B cell (primary cell): ENCODE measurements at regions of chr1 and their contacts with region 1.

Region 1: DNA sequence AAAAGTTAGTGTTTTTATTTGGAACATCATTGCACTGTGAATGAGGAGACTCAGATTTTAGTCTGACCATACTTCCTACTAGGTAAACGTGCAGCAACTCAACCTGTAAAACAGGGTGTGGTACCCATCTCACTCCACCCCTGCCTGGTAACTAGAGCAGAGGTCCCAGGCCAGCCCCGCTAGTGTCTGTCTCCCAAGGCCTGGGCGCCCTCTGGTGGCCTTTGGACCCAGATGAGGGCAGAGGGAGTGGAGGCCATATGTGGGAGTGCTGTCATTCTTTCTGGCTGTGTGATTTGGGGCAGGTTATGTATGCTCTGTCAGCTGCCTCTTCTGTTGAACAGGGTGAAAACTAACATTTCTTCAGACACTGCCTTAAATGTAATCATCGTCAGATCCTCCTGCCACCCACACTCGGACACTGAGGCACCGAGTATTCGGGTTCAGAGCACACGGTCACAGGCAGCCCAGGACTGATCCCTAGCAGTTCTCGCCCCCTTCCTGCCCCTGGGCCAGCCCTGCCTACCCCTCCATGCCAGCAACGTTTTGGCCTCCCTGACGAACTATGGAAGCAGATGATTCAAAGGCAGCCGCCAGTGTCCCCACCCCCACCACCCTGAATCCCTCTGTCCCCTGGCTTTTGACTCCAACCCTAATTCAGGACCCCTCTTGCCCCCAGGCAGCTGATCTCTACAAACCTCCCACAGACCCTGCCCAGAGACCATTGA is 76.0 kb downstream of the CD247 start:
- DNase-seq: peak; percentile 84
- ATAC-seq: peak; percentile 92
- H3K4me3 ChIP-seq: no peak overlapping the region
- H3K4me3 Mint-ChIP-seq: peak overlapping the region; percentile 37
- H3K27ac ChIP-seq: no peak overlapping the region
- H3K27ac Mint-ChIP-seq: no peak overlapping the region
- H3K4me1 ChIP-seq: peaks cover 25 to 29% of the 10 kb centered on the region in 2 donors
- H3K4me1 Mint-ChIP-seq: peaks cover 35% of the 10 kb centered on the region
- H3K27me3 ChIP-seq: peaks cover 0 to 20% (median 3%) of the 10 kb centered on the region in 4 experiments
- H3K27me3 Mint-ChIP-seq: peaks cover 5% of the 10 kb centered on the region
- CTCF ChIP-seq: peak; percentile 93

Region 2: GRCh38 chr1:167273027-167273800 is 169.1 kb before region 1 on chr1:
- CTCF ChIA-PET with region 1: interaction called, 89 read pairs
- POLR2A ChIA-PET with region 1: interaction called, 4 read pairs
- intact Hi-C with region 1: loop called (anchors 1 kb)
- DNase-seq: no peak
- ATAC-seq: no peak
- H3K4me3 ChIP-seq: no peak overlapping the region
- H3K4me3 Mint-ChIP-seq: no peak overlapping the region
- H3K27ac ChIP-seq: no peak overlapping the region
- H3K27ac Mint-ChIP-seq: no peak overlapping the region
- H3K4me1 ChIP-seq: no peaks in the 10 kb centered on the region
- H3K4me1 Mint-ChIP-seq: peaks cover 39% of the 10 kb centered on the region
- H3K27me3 ChIP-seq: no peaks in the 10 kb centered on the region
- H3K27me3 Mint-ChIP-seq: no peaks in the 10 kb centered on the region
- CTCF ChIP-seq: no peak

Region 3: GRCh38 chr1:167401260-167401873 is 40.9 kb before region 1 on chr1:
- CTCF ChIA-PET with region 1: interaction called, 75 read pairs
- POLR2A ChIA-PET with region 1: no interaction called
- intact Hi-C with region 1: loop called (anchors 1 kb)
- DNase-seq: peak; percentile 70
- ATAC-seq: peak; percentile 76
- H3K4me3 ChIP-seq: no peak overlapping the region
- H3K4me3 Mint-ChIP-seq: no peak overlapping the region
- H3K27ac ChIP-seq: no peak overlapping the region
- H3K27ac Mint-ChIP-seq: peak overlapping the region; percentile 18
- H3K4me1 ChIP-seq: no peaks in the 10 kb centered on the region
- H3K4me1 Mint-ChIP-seq: no peaks in the 10 kb centered on the region
- H3K27me3 ChIP-seq: no peaks in the 10 kb centered on the region
- H3K27me3 Mint-ChIP-seq: no peaks in the 10 kb centered on the region
- CTCF ChIP-seq: peak; percentile 82

Region 4: DNA sequence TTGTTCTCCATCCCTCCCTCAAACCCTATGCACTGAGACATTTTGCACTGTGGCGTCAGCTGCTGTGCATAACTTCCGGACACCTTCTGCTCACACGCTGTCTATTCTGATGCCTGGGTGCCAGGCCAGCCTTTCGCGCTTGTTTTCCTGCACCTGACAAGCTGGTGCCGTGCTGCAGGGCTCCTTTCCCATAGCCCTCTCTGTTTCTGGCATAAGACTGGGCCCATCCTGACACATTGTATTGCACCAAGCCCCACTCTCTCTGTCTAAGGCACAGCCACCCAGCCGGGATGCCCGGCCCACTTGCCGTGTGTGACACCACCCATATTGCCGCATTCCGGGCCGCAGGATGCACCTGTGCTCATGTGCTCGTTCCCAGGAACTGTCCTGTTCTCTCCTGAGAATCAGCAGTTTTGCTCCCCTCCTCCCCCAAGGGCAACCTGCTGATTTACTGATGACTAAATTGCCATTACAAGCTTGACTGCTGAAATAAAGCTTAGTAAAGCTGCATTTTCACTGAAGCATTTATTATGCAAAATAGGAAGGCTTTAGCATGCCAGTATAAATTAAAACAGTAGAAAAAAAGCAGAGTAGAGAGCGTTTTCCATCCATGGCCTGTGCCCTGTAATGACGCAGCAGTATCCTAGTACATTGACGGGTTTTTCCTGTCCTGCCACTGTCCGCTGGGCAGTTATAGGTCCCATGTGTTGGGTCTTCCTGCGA is 12.0 kb before region 1 on chr1:
- CTCF ChIA-PET with region 1: interaction called, 51 read pairs
- POLR2A ChIA-PET with region 1: interaction called, 4 read pairs
- intact Hi-C with region 1: loop called (anchors 1 kb)
- DNase-seq: peak; percentile 57
- ATAC-seq: peak; percentile 40
- H3K4me3 ChIP-seq: peak overlapping the region in 2 of 5 experiments; percentile 16 to 25
- H3K4me3 Mint-ChIP-seq: peak overlapping the region; percentile 84
- H3K27ac ChIP-seq: peak overlapping the region; percentile 71
- H3K27ac Mint-ChIP-seq: peak overlapping the region; percentile 97
- H3K4me1 ChIP-seq: peaks cover 37 to 54% of the 10 kb centered on the region in 2 donors
- H3K4me1 Mint-ChIP-seq: peaks cover 50% of the 10 kb centered on the region
- H3K27me3 ChIP-seq: peaks cover 0 to under 1% (median under 1%) of the 10 kb centered on the region in 4 experiments
- H3K27me3 Mint-ChIP-seq: no peaks in the 10 kb centered on the region
- CTCF ChIP-seq: no peak